ENCODE measurements at regions of chr7 and their contacts with region 1.

Region 1: DNA sequence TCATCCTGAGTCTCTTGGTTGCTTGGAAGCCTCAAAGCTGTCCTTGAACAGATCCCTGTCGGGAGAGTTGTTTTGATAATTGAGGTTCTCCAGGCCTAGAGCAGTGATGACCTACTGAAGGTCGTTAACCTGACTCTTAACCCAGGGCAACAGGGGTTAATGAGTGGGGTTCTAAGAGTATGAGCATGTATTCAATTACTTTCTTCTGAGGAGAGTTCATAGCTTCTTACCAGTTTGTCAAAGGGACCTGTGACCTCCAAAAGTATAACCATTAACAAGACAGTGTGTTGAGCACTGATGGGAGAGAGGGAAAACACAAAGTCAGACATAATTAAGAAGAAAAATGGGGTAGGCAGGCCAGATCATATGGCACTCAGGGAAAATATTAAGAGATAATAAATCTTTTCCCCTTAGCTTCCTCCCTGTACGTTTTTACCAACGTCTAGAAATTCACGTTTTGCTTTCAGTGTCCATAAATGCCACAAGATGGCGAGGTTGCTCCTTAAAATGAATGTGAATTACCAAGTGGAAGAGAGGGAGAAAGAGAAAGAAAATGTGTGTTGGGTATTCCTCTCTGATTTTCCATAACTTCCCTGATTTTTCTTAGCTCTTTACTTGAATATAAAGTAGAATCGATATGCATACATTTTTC is 97.6 kb downstream of the SUGCT start:
- DNase-seq: peak; percentile 69
- H3K4me3 Mint-ChIP-seq: no peak overlapping the region
- H3K27ac Mint-ChIP-seq: peak overlapping the region; percentile 50
- H3K4me1 Mint-ChIP-seq: peaks cover 10% of the 10 kb centered on the region
- H3K27me3 Mint-ChIP-seq: no peaks in the 10 kb centered on the region
- CTCF ChIP-seq: peak; percentile 65

Region 2: DNA sequence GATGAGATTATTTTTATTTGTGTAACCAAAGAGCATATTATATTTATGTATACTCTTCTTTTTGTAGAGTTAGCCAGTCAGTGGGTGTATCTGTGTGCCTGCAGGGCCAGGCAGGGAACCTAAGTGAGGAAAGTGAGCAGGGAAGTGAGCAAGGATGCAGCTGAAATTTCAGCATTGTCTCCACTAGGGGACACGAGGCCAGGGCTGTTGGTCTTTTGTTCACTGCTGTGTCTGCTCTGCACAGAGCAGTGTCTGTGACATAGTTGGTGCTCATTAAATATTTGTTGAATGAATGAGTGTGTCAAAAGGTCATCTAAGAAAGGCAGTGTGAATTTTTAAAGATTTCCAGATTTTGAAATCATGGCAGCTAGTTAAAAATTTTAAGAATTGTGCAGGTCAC is 45.8 kb before region 1 on chr7:
- CTCF ChIA-PET with region 1: no interaction called
- POLR2A ChIA-PET with region 1: no interaction called
- intact Hi-C with region 1: no loop called
- DNase-seq: no peak
- H3K4me3 Mint-ChIP-seq: no peak overlapping the region
- H3K27ac Mint-ChIP-seq: no peak overlapping the region
- H3K4me1 Mint-ChIP-seq: no peaks in the 10 kb centered on the region
- H3K27me3 Mint-ChIP-seq: no peaks in the 10 kb centered on the region
- CTCF ChIP-seq: no peak

Region 3: DNA sequence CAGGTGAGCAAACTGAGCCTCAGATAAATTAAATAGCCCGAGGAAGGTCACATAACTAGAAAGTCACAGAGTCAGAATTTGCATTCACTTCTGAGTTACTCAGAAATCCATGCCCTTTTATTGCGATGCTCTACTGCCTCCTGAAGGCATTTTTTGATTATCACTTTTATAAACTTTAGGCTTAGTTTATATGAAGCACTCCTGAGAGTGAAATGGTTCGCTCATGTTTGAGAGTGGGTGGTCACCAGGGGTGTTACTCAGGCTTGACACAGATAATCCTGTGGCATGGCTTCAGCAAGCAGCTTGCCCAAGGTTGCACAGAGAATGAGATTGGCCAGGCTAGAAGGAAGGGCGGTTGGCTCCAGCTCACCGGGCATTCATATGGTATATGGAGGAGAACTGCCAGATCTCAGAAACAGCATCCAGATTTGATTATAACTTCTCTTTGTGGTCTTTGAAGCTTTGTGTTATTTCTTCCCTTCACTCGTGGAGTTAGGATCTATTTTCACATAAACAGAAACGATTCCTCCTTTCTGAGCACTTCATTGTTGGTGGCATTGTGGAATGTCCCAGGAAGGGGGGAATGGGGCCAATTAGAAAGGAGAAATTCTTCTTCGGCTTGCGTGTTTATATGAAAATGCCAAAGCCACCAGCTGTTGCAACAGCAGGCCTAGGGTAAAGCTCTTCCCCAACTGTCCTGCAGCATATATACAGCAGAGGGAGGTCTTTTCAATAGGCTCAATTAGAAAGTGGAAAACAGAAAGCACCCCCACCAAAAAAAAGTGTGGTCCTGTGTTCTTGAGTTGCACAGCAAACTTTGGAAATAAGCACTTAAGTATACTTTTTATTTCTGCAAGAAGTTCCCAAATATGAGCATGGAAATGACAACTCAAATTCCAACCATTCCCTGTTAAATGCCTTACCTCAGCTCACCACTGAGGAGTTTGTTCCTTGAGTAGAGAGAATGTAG is 531.2 kb after region 1 on chr7:
- CTCF ChIA-PET with region 1: no interaction called
- POLR2A ChIA-PET with region 1: no interaction called
- intact Hi-C with region 1: loop called (anchors 10 kb)
- DNase-seq: peak; percentile 8
- H3K4me3 Mint-ChIP-seq: no peak overlapping the region
- H3K27ac Mint-ChIP-seq: no peak overlapping the region
- H3K4me1 Mint-ChIP-seq: no peaks in the 10 kb centered on the region
- H3K27me3 Mint-ChIP-seq: no peaks in the 10 kb centered on the region
- CTCF ChIP-seq: peak; percentile 9

Region 4: GRCh38 chr7:41711283-41712064 is 1479.1 kb after region 1 on chr7:
- CTCF ChIA-PET with region 1: interaction called, 60 read pairs
- POLR2A ChIA-PET with region 1: no interaction called
- intact Hi-C with region 1: no loop called
- DNase-seq: peak; percentile 57
- H3K4me3 Mint-ChIP-seq: no peak overlapping the region
- H3K27ac Mint-ChIP-seq: no peak overlapping the region
- H3K4me1 Mint-ChIP-seq: no peaks in the 10 kb centered on the region
- H3K27me3 Mint-ChIP-seq: no peaks in the 10 kb centered on the region
- CTCF ChIP-seq: peak; percentile 27

Region 5: DNA sequence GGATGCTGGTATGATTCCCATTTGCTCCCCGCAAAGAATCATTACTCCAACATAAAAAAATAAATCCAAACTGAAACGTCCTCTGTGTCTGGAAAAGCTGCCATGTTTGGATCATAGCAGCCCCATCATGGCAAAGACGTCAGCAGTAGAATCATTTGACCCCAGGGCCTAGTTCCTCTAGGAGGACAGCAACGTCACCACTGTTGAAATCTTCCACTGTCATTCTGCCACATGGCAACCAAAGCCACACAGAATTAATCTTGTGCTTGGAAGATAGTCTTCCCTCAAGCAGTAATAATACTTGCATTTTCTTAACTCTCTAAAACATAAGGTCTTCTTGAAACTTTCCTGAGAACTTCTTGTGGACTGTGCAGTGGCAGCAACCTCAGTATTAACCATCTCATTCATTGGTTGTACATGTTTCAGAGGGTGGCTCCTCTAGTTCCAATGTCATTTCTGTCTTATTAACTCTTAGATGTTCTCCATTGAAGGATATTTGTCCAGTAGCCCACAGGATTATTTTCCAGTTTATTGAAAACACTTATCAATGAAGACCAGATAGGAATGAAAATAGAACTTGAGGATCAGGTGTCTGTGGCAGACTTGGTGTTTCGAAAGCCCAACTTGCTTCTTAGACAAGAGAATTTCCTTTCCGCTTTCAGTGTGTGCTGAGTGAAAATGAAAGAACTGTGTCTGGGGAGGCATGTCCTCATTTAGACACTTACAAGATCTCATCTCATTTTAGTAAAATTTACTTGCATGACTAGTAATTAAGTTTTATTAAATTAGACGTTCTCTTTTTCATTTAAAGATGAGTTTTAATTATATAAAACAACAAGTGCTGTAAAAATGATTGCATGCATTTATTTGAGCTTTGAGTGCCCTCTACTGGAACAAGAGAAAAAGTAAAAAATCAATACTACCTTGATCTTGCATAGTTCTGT is 1499.4 kb after region 1 on chr7:
- CTCF ChIA-PET with region 1: interaction called, 33 read pairs
- POLR2A ChIA-PET with region 1: no interaction called
- intact Hi-C with region 1: loop called (anchors 1 kb)
- DNase-seq: peak; percentile 26
- H3K4me3 Mint-ChIP-seq: no peak overlapping the region
- H3K27ac Mint-ChIP-seq: no peak overlapping the region
- H3K4me1 Mint-ChIP-seq: no peaks in the 10 kb centered on the region
- H3K27me3 Mint-ChIP-seq: peaks cover 17% of the 10 kb centered on the region
- CTCF ChIP-seq: peak; percentile 47